ENCODE measurements at regions of chr12 and their contacts with region 1.

Region 1: DNA sequence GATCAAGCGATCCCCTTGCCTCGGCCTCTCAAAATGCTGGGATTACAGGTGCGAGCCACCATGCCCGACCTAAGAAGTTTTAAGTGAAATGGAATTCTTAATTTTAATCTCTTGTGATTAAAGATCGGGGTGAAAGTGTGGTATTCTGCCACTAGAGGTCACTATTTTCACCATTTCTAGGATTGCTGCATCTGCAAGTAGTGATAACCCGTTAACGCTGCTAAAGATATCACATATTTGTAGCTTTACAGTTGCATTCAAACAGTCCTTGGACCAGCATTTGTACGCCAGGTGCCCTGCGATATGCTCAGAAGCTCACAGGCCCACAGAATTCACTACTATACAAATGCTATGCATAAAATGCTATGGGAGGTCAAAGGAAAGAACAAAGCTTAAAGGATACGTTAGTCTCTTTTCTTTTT is 19.3 kb downstream of the CCDC62 start:
- DNase-seq: no peak
- ATAC-seq: peak; percentile 80 to 88 (median 84)
- H3K4me3 ChIP-seq: no peak overlapping the region
- H3K27ac ChIP-seq: no peak overlapping the region
- H3K4me1 ChIP-seq: no peaks in the 10 kb centered on the region
- H3K27me3 ChIP-seq: no peaks in the 10 kb centered on the region
- CTCF ChIP-seq: peak; percentile 71 to 79 (median 78)
- POLR2A ChIP-seq: no peak

Region 2: GRCh38 chr12:122669397-122670070 is 124.2 kb before region 1 on chr12:
- intact Hi-C with region 1: no loop called
- DNase-seq: no peak
- ATAC-seq: no peak
- H3K4me3 ChIP-seq: no peak overlapping the region
- H3K27ac ChIP-seq: no peak overlapping the region
- H3K4me1 ChIP-seq: no peaks in the 10 kb centered on the region
- H3K27me3 ChIP-seq: no peaks in the 10 kb centered on the region
- CTCF ChIP-seq: no peak
- POLR2A ChIP-seq: no peak

Region 3: DNA sequence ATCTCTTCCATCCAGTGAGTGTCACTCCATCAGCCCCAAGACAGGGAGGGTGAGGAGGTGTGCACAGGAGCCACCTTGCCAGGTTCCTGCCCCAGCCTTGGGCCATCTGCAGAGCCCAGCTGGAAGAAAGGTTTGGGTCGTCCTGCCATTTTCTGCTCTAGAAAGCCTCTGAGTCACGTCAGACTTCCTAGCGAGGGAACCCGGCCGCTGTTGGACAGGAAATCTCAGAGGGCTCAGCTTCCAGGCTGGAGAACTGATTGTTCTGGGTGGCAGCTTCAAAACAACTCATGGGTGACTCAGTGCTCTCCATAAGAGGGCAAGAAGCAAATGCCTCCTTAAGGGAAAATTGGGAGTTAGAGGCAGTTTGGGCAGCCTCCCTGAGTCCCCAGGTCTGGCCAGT is 58.1 kb after region 1 on chr12:
- intact Hi-C with region 1: loop called in 1 of 2 experiments (anchors 10 kb)
- DNase-seq: peak in 1 of 3 donors; percentile 27
- ATAC-seq: peak; percentile 17 to 62 (median 37)
- H3K4me3 ChIP-seq: no peak overlapping the region
- H3K27ac ChIP-seq: no peak overlapping the region
- H3K4me1 ChIP-seq: no peaks in the 10 kb centered on the region
- H3K27me3 ChIP-seq: no peaks in the 10 kb centered on the region
- CTCF ChIP-seq: no peak
- POLR2A ChIP-seq: no peak

Region 4: GRCh38 chr12:122951979-122952892 is 158.5 kb after region 1 on chr12:
- intact Hi-C with region 1: loop called (anchors 5 to 10 kb)
- DNase-seq: peak; percentile 78 to 83 (median 83)
- ATAC-seq: peak; percentile 97 to 99 (median 98)
- H3K4me3 ChIP-seq: no peak overlapping the region
- H3K27ac ChIP-seq: no peak overlapping the region
- H3K4me1 ChIP-seq: no peaks in the 10 kb centered on the region
- H3K27me3 ChIP-seq: no peaks in the 10 kb centered on the region
- CTCF ChIP-seq: peak; percentile 82 to 97 (median 93)
- POLR2A ChIP-seq: no peak

Measured in right lobe of liver (tissue), 6 donors.